ENCODE measurements at regions of chr9 and their contacts with region 1.

Region 1: GRCh38 chr9:128034821-128035764 is 32.0 kb downstream of the NAIF1 start:
- DNase-seq: peak; percentile 29 to 89 (median 67)
- ATAC-seq: peak; percentile 48
- H3K4me3 ChIP-seq: no peak overlapping the region
- H3K4me3 Mint-ChIP-seq: no peak overlapping the region
- H3K27ac ChIP-seq: no peak overlapping the region
- H3K27ac Mint-ChIP-seq: peak overlapping the region; percentile 89
- H3K4me1 ChIP-seq: peaks cover 44% of the 10 kb centered on the region
- H3K4me1 Mint-ChIP-seq: peaks cover 37% of the 10 kb centered on the region
- H3K27me3 ChIP-seq: no peaks in the 10 kb centered on the region
- H3K27me3 Mint-ChIP-seq: no peaks in the 10 kb centered on the region
- CTCF ChIP-seq: peak; percentile 86

Region 2: GRCh38 chr9:127626752-127627493 is 408.2 kb before region 1 on chr9:
- CTCF ChIA-PET with region 1: no interaction called
- POLR2A ChIA-PET with region 1: no interaction called
- intact Hi-C with region 1: no loop called
- DNase-seq: no peak
- ATAC-seq: no peak
- H3K4me3 ChIP-seq: no peak overlapping the region
- H3K4me3 Mint-ChIP-seq: no peak overlapping the region
- H3K27ac ChIP-seq: no peak overlapping the region
- H3K27ac Mint-ChIP-seq: no peak overlapping the region
- H3K4me1 ChIP-seq: no peaks in the 10 kb centered on the region
- H3K4me1 Mint-ChIP-seq: no peaks in the 10 kb centered on the region
- H3K27me3 ChIP-seq: no peaks in the 10 kb centered on the region
- H3K27me3 Mint-ChIP-seq: no peaks in the 10 kb centered on the region
- CTCF ChIP-seq: no peak

Region 3: DNA sequence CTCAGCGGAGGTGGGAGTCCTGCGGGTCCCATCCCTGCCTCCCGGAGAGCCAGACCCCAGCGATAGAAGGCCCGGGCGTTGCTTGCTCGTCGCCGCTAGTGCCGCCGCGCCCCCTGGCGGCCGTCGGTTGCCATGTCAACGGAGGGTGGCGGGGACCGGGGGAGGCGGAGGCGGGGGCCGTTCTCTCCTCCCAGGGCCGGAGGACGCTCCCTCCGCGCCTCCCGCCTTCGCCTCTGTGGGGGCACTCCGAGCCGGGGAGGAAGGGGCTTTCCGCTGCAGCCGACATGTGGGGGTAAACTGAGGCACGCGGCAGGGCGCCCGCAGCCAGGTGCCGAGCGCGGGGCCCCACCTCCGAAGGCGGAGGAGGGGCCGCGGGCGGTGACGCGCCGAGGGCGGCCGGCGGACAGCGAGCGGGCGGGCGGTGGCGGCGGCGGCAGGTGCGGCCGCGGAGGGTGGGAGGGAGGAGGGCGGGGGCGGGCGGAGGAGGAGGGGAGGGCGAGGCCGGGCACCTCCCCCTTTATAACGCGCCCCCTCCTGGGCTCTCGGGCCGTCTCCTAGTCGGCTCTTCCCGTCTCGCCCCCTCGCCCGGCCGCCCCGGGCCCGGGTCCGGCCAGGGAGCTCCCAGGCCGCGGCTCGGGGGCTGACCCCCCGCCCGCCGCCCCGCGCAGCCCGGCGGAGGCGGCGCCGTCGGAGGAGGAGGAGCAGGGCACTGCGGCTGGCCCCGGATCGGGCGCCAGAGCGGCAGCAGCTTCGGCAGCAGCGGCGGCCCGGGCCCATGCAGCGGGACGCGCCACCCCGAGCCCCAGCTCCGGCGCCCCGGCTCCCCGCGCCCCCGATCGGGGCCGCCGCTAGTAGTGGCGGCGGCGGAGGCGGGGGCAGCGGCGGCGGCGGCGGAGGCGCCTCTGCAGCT is 249.8 kb before region 1 on chr9:
- CTCF ChIA-PET with region 1: no interaction called
- POLR2A ChIA-PET with region 1: no interaction called
- intact Hi-C with region 1: loop called in 1 of 2 experiments (anchors 1 kb)
- DNase-seq: peak; percentile 85 to 97 (median 91)
- ATAC-seq: peak; percentile 53
- H3K4me3 ChIP-seq: peak overlapping the region; percentile 49 to 82
- H3K4me3 Mint-ChIP-seq: peak overlapping the region; percentile 89
- H3K27ac ChIP-seq: peak overlapping the region; percentile 73 to 94
- H3K27ac Mint-ChIP-seq: peak overlapping the region; percentile 96
- H3K4me1 ChIP-seq: peaks cover 66% of the 10 kb centered on the region
- H3K4me1 Mint-ChIP-seq: peaks cover 60% of the 10 kb centered on the region
- H3K27me3 ChIP-seq: no peaks in the 10 kb centered on the region
- H3K27me3 Mint-ChIP-seq: no peaks in the 10 kb centered on the region
- CTCF ChIP-seq: peak; percentile 74

Region 4: GRCh38 chr9:127943731-127944144 is 91.4 kb before region 1 on chr9:
- CTCF ChIA-PET with region 1: interaction called, 678 read pairs
- POLR2A ChIA-PET with region 1: interaction called, 7 read pairs
- intact Hi-C with region 1: loop called (anchors 1 kb)
- DNase-seq: peak; percentile 49 to 87 (median 78)
- ATAC-seq: peak; percentile 85
- H3K4me3 ChIP-seq: no peak overlapping the region
- H3K4me3 Mint-ChIP-seq: no peak overlapping the region
- H3K27ac ChIP-seq: no peak overlapping the region
- H3K27ac Mint-ChIP-seq: peak overlapping the region; percentile 89
- H3K4me1 ChIP-seq: peaks cover 39% of the 10 kb centered on the region
- H3K4me1 Mint-ChIP-seq: peaks cover 35% of the 10 kb centered on the region
- H3K27me3 ChIP-seq: no peaks in the 10 kb centered on the region
- H3K27me3 Mint-ChIP-seq: no peaks in the 10 kb centered on the region
- CTCF ChIP-seq: peak; percentile 83

Region 5: DNA sequence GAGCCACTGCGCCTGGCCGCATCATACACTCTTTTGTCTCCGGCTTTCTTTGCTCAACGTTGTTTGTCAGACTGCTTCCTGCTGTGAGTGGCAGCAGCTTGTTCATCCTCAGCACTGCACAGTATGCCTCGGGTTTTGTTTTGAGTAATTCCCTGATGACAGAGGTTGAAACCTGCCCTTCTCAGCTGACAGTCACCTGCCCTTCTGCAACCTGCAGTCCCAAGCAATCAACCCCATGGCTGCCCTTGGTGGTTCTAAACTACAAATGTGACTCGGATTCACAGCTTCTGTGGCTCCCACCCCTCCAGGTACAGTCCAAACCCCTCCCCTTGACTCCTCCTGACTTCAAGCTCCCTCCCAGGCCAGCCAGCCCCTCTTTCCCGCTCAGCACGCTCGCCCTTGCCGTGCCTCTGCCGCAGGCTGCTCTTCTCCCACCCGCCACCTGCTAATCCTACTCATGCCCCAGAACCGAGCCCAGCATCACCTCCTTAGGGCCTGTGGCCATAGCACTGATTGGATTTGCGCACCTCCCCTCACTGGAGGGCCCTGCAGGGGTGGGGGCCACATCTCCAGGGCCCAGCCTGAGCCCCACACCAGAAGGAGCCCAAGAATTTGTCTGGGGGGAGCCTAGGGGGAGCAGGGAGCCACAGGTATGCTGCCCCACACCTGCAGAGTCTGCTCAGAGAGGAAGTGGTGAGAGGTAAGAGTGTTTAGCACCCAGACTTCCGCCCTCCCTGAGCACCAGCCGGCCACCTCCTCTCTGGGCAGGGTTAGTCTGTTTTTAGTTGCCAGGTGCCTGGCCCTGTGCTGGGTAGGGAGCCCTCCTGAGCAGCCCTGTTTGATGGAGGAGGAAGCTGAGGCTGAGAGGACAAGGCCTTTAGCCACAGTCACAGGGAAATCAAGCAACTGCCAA is 64.4 kb before region 1 on chr9:
- CTCF ChIA-PET with region 1: interaction called, 214 read pairs
- POLR2A ChIA-PET with region 1: interaction called, 467 read pairs
- intact Hi-C with region 1: loop called in 1 of 2 experiments (anchors 1 kb)
- DNase-seq: peak; percentile 38 to 86 (median 75)
- ATAC-seq: peak; percentile 60
- H3K4me3 ChIP-seq: peak overlapping the region; percentile 32 to 73
- H3K4me3 Mint-ChIP-seq: peak overlapping the region; percentile 88
- H3K27ac ChIP-seq: peak overlapping the region; percentile 67 to 76
- H3K27ac Mint-ChIP-seq: peak overlapping the region; percentile 99
- H3K4me1 ChIP-seq: peaks cover 96% of the 10 kb centered on the region
- H3K4me1 Mint-ChIP-seq: peaks cover 98% of the 10 kb centered on the region
- H3K27me3 ChIP-seq: no peaks in the 10 kb centered on the region
- H3K27me3 Mint-ChIP-seq: no peaks in the 10 kb centered on the region
- CTCF ChIP-seq: no peak

Region 6: DNA sequence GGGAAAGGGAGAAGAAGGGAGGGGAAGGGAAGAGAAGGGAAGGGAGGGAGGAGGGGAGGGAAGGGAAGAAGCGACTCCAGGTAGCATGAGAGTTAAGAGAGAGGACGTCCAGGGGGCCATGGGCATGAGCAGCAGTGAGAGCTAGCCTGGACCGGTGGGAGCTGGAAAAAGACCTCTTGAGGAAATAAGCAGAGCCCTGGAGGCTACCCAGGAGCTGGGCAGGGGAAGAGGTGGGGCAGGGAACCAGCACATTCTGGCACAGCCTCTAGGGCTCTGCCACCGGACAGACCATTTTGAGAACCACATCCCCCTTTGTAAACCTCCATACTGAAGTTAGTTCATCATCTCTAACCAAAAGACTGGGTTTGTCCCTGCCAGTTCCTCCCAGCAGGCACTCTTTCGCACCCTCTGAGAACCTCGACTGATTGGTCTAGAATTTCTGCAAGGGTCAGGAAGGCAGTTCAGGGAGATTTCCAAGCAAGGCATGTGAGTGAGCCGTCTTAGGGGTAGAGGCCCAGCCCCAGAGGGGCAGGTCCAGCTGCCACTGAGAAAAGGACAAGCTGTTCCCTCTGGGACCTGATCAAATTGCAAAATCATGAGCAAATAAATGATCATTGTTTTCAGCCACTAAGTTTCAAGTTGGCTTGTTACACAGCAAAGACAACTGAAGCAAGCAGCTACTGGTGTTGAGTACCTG is 20.4 kb after region 1 on chr9:
- CTCF ChIA-PET with region 1: interaction called, 15 read pairs
- POLR2A ChIA-PET with region 1: no interaction called
- intact Hi-C with region 1: no loop called
- DNase-seq: no peak
- ATAC-seq: no peak
- H3K4me3 ChIP-seq: no peak overlapping the region
- H3K4me3 Mint-ChIP-seq: no peak overlapping the region
- H3K27ac ChIP-seq: no peak overlapping the region
- H3K27ac Mint-ChIP-seq: no peak overlapping the region
- H3K4me1 ChIP-seq: peaks cover 4% of the 10 kb centered on the region
- H3K4me1 Mint-ChIP-seq: no peaks in the 10 kb centered on the region
- H3K27me3 ChIP-seq: no peaks in the 10 kb centered on the region
- H3K27me3 Mint-ChIP-seq: no peaks in the 10 kb centered on the region
- CTCF ChIP-seq: no peak

Region 7: DNA sequence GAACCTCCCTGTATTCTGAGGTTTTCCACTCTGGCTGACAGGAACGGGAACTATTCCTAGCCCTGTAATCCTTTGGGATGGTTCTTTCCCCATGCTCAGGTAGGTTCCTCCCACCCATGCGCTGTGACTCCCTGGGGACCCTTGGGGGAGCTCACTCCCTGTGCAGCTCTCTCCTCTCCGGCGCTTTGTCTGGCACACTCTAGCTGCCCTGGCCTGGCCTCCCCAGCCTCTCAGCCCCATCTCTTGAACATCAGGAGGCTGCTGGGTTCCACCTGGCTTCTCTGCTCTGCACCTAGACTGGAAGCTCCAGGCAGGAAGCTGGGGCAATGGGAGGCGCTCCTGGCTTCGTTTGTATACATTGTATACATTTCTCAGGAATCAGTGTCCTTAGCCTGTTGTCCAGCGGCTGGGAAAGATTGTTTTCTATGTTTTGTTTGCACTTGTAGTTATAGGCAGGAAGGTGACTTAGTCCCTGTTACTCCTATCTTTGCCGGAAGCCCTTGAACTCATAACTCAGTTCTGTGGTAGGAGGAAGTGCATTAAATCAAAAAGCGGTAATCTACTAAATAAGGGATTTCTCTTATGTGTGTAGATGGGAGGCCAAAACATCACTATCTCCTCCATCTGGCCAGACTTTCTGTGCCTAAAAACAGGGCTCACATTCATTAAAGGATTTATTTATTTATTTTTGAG is 53.3 kb after region 1 on chr9:
- CTCF ChIA-PET with region 1: interaction called, 25 read pairs
- POLR2A ChIA-PET with region 1: no interaction called
- intact Hi-C with region 1: loop called in 1 of 2 experiments (anchors 1 kb)
- DNase-seq: peak in 1 of 9 experiments; percentile 49
- ATAC-seq: peak; percentile 26
- H3K4me3 ChIP-seq: no peak overlapping the region
- H3K4me3 Mint-ChIP-seq: peak overlapping the region; percentile 24
- H3K27ac ChIP-seq: peak overlapping the region in 1 of 2 experiments; percentile 8
- H3K27ac Mint-ChIP-seq: peak overlapping the region; percentile 57
- H3K4me1 ChIP-seq: peaks cover 57% of the 10 kb centered on the region
- H3K4me1 Mint-ChIP-seq: peaks cover 62% of the 10 kb centered on the region
- H3K27me3 ChIP-seq: no peaks in the 10 kb centered on the region
- H3K27me3 Mint-ChIP-seq: no peaks in the 10 kb centered on the region
- CTCF ChIP-seq: no peak

Region 8: GRCh38 chr9:128117613-128118471 is 82.7 kb after region 1 on chr9:
- CTCF ChIA-PET with region 1: interaction called, 38 read pairs
- POLR2A ChIA-PET with region 1: no interaction called
- intact Hi-C with region 1: loop called (anchors 1 to 5 kb)
- DNase-seq: peak; percentile 93 to 100 (median 96)
- ATAC-seq: peak; percentile 96
- H3K4me3 ChIP-seq: no peak overlapping the region
- H3K4me3 Mint-ChIP-seq: no peak overlapping the region
- H3K27ac ChIP-seq: no peak overlapping the region
- H3K27ac Mint-ChIP-seq: no peak overlapping the region
- H3K4me1 ChIP-seq: peaks cover 6% of the 10 kb centered on the region
- H3K4me1 Mint-ChIP-seq: peaks cover 5% of the 10 kb centered on the region
- H3K27me3 ChIP-seq: no peaks in the 10 kb centered on the region
- H3K27me3 Mint-ChIP-seq: no peaks in the 10 kb centered on the region
- CTCF ChIP-seq: peak; percentile 100

Measured in CD8-positive, alpha-beta T cell (primary cell).